OCI-LY7 (cell line): ENCODE measurements at regions of chr2 and their contacts with region 1.

Region 1: DNA sequence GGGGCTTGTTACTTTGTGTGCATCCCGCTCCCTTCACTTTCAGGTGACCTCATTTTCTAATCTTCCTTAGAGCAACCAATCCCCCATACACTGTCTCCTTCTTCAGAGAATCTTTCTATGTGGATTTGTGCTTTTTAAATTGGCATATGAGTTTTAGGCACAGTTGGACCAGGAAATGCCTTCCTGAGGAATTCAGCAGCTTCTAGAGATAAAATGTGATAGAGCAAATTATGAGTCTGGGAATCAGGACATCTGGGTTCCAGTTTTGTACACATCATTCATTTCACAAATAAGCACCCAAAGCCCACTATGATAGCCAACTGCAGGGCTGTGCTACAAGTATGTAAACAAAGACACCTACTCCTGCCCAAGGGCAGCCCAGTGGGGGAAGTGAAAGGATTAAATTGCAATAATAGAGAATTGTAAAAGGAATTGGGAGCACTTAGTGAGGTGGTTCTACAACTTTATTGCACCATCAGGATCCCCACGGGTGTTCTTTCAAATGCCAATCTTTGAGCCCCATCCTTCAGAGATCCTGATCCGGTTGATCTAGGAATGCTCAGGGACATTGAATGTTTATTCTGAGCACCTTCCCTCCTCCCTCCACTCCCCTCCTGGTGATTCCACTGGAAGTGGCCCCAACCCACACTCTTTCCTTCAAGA is 11.3 kb upstream of the KCMF1 start:
- DNase-seq: no peak
- H3K4me3 ChIP-seq: no peak overlapping the region
- H3K27ac ChIP-seq: no peak overlapping the region
- H3K4me1 ChIP-seq: no peaks in the 10 kb centered on the region
- CTCF ChIP-seq: no peak

Region 2: GRCh38 chr2:84897773-84898172 is 61.9 kb before region 1 on chr2:
- CTCF ChIA-PET with region 1: no interaction called
- POLR2A ChIA-PET with region 1: interaction called, 10 read pairs
- intact Hi-C with region 1: no loop called
- DNase-seq: no peak
- H3K4me3 ChIP-seq: no peak overlapping the region
- H3K27ac ChIP-seq: peak overlapping the region; percentile 18
- H3K4me1 ChIP-seq: peaks cover 31% of the 10 kb centered on the region
- CTCF ChIP-seq: no peak

Region 3: DNA sequence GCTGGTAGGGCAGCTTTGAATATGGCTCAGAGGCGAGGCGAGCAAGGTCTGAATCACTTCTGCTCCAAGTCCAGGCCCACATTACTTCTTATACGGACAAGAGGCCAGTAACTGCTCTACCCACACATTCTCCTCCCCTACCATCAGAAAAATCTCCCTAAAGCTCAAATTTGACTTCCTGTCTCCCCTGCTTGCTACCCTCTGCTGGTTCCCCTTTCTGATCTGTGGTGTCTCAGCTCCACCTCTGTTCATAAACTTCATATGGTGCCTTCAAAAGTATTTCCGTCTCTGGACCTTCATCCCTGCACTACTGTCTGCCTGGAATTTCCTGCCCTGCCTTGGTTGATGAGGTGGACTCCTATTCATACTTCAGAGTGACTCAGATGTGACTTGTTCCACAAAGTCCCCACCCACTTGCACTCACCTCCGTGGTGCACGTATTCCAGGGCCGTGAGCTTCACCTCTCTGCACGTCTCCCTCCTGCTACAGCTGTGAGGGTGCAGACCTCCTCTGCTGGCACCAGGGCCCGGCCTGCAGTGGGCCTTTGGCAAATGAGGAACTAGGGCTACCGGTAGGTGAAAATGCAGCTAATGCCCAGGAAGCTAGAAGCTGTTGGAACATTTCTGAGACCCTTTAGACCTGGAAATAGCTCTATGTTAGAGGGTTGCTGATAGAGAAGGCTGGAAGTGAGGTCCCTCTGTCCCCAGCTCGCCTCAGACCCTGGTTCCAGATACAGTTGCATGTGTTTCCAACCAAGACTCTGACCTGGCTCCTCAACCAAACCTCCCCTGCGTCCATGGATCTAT is 13.2 kb before region 1 on chr2:
- CTCF ChIA-PET with region 1: interaction called, 4 read pairs
- POLR2A ChIA-PET with region 1: interaction called, 15 read pairs
- intact Hi-C with region 1: no loop called
- DNase-seq: peak; percentile 70
- H3K4me3 ChIP-seq: peak overlapping the region; percentile 42
- H3K27ac ChIP-seq: peak overlapping the region; percentile 75
- H3K4me1 ChIP-seq: peaks cover 41% of the 10 kb centered on the region
- CTCF ChIP-seq: peak; percentile 54

Region 4: GRCh38 chr2:85032621-85033020 is 73.0 kb after region 1 on chr2:
- CTCF ChIA-PET with region 1: no interaction called
- POLR2A ChIA-PET with region 1: no interaction called
- intact Hi-C with region 1: no loop called
- DNase-seq: no peak
- H3K4me3 ChIP-seq: no peak overlapping the region
- H3K27ac ChIP-seq: no peak overlapping the region
- H3K4me1 ChIP-seq: no peaks in the 10 kb centered on the region
- CTCF ChIP-seq: no peak